ENCODE measurements at regions of chr10 and their contacts with region 1.

Region 1: DNA sequence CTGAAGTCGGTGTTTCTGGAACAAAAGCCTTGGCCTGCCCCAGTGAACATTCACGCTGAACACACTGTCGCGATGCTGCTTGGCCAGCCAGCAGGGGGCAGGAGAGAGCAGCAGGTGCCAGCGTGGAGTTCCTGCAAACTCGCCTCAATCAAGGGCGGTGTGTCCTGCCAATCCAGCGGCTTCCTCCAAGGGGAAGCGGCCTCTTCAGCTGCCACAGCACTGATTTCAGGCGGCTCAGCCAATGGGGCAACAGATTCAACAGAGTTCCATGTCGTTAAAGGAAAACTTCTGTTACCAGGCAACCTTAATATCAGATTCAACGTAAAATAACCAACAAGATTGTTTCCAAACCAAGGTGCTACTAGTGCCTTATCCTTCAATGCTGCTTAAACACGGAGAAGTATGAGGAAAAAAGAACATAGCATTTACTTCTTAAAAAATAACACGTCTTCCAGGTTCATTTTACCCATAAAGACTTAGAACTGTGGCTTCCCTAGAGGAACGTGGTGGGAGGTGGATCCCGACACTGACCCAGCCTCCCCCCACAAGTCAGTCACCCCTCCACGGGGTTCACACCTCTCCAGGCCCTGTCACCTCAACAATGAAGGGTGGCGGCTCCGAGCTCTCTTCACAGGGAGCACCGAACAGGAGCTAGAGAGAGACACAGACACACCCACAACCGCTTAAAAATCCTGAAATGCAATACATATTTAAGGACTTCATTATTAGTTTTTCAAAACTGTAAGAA is 178.2 kb downstream of the DIP2C start:
- DNase-seq: peak; percentile 89
- CTCF ChIP-seq: peak; percentile 98

Region 2: GRCh38 chr10:784403-785088 is 273.3 kb after region 1 on chr10:
- in situ Hi-C with region 1: loop called (anchors 25 kb)
- DNase-seq: peak; percentile 36
- CTCF ChIP-seq: no peak

Measured in GM13976 (cell line).